ENCODE measurements at regions of chr4 and their contacts with region 1.

Region 1: DNA sequence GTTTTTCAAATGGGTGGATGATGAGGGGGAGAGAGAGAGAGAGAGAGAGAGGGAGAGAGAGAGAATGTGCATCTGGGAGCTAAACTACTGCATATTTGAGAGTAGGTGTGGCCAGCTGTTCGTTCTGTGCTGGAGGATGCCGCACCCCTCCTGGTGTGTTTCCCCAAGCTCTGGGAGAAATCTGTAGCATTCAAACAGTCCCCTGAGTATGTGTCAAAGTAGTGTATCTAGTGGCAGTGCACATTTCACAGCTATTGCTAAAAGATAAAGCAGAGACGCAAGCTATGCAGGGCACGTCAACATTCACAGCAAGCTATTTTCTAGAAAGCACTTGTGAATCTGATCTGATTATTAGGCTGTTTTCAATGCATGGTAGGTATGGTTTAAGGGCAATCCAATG is 83.5 kb upstream of the LIMCH1 start:
- DNase-seq: no peak
- ATAC-seq: peak; percentile 53

Region 2: DNA sequence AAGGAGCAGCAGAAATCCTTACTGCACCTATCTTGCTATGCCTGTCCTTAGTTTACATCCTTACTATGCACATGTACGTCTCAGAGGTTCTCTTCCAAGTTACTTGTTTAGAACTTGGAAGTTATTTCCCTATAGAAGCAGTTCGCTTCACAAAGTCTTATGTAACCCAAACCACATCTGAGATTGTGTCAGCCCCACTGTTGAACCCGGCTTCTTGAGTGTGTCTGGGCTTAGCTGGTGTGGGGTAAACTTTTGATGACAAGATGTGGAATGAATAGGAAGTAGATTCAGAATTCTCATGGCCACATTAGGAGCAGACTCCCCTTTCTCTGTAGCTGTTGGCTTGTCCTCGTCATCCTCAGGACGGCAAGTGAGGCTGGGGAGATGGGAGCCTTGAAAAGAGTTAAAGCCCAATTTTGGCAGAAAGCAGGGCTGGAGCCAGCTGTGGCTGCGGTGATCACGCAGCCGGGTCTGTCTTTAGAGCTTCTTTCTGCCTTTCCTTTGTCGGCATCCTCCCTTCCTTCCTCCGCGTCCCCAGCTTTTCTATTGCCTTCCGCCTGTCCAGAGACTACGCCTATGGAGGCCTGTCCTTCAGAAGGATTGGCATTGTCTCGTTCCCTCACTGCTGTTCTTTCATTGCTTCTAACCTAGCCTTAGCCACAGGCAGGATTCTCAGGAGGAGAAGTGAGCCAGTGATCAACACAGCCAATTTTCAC is 60.5 kb after region 1 on chr4:
- intact Hi-C with region 1: loop called (anchors 5 kb)
- DNase-seq: no peak
- ATAC-seq: no peak

Region 3: GRCh38 chr4:41609851-41610250 is 155.4 kb after region 1 on chr4:
- intact Hi-C with region 1: no loop called
- DNase-seq: no peak
- ATAC-seq: no peak

Region 4: DNA sequence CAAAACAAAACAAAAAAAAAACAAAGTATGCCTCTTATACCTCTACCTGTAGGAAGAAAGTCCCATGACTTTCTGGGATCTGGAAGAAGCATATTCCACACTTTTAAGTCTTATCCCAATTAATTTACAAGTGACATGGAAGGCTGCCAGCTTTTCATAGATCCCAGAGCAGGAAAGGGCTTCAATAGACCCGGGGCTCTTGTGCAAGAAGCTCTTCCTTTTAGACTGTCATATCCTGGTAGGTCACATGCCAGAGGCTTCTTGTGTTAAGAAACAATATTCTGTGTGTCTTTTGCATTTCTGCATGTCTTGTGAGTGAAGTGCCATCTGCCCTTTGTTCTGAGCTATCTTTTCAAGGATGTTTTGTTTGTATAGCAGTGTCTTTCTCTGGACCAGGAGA is 378.5 kb after region 1 on chr4:
- intact Hi-C with region 1: no loop called
- DNase-seq: no peak
- ATAC-seq: no peak